Right cardiac atrium (tissue), 5 donors: ENCODE measurements at regions of chr10 and their contacts with region 1.

Region 1: DNA sequence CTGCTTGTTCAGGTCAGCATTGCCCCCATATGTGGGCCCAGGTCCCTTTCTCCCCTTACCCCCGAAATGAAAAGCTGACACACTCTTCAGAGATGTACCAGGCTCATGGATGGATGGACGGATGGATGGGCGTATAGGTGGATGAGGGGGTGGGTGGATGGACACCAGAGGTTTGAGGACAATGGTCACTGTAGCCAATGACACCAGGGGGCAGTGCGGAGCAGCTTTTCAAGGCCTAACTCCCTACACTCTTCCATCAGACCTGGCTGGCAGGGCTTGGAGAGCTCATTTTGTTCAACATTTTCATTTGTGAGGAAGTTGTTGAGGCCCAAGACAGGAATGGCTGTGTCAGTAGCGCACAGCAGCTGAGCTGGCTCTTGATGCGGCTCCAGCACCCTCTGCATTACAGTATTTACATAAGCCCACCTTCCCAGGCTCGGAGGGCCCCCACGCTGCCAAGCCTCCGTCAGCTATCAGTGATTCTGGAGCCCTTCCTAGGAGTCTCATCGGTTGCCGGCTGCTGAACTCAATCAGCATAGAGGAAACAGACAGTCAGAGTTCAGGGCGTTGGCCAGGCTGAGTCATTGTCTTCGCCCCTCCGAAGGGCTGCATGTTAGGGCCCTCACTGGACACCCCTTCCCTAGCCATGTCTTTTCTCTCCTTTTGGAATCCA is 11.6 kb upstream of the FFAR4 start:
- DNase-seq: peak; percentile 84 to 91 (median 89)
- ATAC-seq: peak; percentile 91 to 92
- H3K4me3 ChIP-seq: no peak overlapping the region
- H3K27ac ChIP-seq: no peak overlapping the region
- H3K4me1 ChIP-seq: no peaks in the 10 kb centered on the region
- H3K27me3 ChIP-seq: no peaks in the 10 kb centered on the region

Region 2: DNA sequence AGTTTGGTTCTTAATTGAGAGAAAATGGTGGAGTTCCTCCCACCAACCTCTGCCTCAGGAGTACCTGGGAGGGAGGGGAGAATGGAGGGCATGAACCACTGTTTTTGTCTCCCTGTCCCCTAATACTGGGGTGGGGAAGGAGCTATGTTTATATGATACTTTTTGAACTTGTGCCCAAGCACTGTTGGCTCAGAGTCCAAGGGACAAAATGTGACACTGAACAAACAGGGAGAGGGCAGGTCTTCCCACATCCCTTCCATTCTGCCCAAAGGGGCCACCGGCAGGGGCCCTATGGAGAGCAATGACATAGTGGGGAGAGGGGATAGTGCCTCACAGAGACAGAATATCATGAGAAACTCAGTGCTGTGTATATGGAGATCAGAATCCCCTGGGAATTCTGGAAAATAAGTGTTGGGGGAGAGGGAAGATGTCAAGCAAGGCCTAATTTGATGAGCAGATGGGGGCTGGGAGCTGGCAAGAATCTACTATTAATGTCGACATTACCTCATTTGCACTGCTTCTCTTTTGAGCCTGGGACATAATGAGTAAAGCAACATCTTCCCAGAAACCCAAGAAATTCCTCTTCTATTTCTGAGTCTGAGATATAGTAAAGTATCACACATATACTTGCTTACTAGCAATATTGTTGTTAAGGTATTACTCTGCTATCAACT is 300.6 kb before region 1 on chr10:
- intact Hi-C with region 1: no loop called
- DNase-seq: no peak
- ATAC-seq: no peak
- H3K4me3 ChIP-seq: no peak overlapping the region
- H3K27ac ChIP-seq: no peak overlapping the region
- H3K4me1 ChIP-seq: no peaks in the 10 kb centered on the region
- H3K27me3 ChIP-seq: no peaks in the 10 kb centered on the region

Region 3: GRCh38 chr10:93639791-93640190 is 84.9 kb after region 1 on chr10:
- intact Hi-C with region 1: no loop called
- DNase-seq: no peak
- ATAC-seq: no peak
- H3K4me3 ChIP-seq: no peak overlapping the region
- H3K27ac ChIP-seq: no peak overlapping the region
- H3K4me1 ChIP-seq: no peaks in the 10 kb centered on the region
- H3K27me3 ChIP-seq: no peaks in the 10 kb centered on the region

Region 4: DNA sequence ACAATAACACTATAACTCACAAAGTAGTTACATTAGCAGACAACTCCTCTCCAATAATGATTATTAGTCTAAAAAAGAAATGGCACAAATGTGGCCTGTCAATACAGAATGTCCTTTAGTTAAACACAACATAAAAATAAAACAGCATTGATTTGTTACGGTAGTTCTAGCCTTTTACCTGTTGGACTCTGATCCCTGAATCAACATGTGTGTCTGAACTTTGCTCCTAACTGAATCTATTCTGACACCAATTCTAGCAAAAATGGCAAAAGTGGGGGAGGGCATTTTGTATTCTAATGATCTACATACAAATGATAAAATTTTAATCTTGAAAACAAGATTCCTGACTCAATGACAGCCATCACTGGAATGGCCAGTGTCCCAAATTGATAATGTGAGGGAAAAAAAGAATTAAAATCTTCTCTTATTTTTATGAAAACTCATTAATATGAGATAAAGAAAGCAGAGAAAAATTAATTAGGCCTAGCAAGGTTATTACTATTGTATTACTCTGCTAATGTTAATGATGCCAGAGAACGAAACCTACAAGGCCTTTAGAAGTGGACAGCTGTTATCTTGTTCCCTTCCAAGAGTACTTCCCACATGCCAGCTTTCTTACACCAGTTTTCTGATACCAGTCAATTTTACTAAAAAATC is 117.3 kb after region 1 on chr10:
- intact Hi-C with region 1: loop called in 2 of 4 experiments (anchors 5 to 10 kb)
- DNase-seq: no peak
- ATAC-seq: no peak
- H3K4me3 ChIP-seq: no peak overlapping the region
- H3K27ac ChIP-seq: no peak overlapping the region
- H3K4me1 ChIP-seq: no peaks in the 10 kb centered on the region
- H3K27me3 ChIP-seq: no peaks in the 10 kb centered on the region

Region 5: DNA sequence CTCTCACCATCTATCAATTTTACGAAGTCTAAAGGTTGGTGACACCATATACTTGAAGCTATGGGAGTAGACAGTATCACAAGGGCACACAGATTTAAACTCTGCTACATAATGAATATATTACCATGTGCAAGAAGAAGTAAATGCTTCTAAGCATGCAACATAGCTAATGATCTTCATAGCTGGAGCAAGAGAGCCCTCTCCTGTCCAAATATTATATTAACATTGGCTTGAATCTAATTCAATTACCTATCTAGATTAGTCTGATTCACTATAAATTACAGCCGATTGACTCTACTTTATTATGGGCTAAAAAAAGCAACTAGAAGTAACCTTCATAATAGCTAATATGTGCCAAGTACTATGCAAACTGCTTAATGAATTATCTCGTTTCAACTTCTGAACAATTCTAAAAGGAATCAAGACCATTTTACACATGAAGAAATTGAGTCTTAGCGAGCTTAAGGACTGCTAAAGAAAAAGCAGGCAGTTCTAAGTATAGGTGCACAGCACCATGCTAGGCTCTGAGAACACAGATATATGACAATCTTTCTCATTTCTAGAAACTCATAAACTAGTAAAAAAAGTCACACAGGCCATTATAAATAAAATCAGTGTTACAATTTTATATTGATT is 125.6 kb after region 1 on chr10:
- intact Hi-C with region 1: loop called in 3 of 4 experiments (anchors 5 to 10 kb)
- DNase-seq: no peak
- ATAC-seq: peak; percentile 39 to 60
- H3K4me3 ChIP-seq: no peak overlapping the region
- H3K27ac ChIP-seq: no peak overlapping the region
- H3K4me1 ChIP-seq: no peaks in the 10 kb centered on the region
- H3K27me3 ChIP-seq: no peaks in the 10 kb centered on the region

Region 6: DNA sequence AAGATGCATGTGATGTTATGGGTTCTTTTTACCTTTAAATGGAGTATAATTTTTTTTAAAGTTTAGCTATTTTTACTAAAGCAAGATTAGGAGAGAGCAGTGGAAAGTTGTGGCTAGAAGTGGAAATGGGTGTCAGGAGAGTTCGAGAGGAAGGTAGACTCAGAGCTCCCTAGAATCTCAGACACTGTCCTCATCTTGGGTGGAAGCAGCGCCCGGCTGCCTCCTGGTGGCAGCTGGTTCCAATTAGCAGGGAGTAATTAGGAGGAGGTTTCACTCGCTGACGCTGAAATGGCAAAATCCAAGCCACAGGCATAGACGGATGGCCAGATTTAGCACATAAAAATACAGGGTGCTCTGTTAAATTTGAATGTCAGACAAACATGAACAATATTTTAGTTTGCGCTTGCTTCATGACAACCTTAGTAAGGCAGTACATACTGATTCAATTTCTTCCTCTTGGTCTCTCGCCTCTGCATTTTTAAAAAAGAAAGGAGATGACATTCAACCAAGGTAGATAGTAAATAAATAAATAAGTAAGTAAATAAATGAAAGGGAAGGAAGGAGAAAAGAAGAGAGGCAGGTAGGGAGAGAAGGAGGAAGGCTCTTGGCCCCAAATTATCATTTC is 261.3 kb after region 1 on chr10:
- intact Hi-C with region 1: no loop called
- DNase-seq: peak; percentile 65 to 91 (median 86)
- ATAC-seq: peak; percentile 91 to 93
- H3K4me3 ChIP-seq: no peak overlapping the region
- H3K27ac ChIP-seq: no peak overlapping the region
- H3K4me1 ChIP-seq: no peaks in the 10 kb centered on the region
- H3K27me3 ChIP-seq: no peaks in the 10 kb centered on the region